ENCODE measurements at regions of chrX and their contacts with region 1.

Region 1: DNA sequence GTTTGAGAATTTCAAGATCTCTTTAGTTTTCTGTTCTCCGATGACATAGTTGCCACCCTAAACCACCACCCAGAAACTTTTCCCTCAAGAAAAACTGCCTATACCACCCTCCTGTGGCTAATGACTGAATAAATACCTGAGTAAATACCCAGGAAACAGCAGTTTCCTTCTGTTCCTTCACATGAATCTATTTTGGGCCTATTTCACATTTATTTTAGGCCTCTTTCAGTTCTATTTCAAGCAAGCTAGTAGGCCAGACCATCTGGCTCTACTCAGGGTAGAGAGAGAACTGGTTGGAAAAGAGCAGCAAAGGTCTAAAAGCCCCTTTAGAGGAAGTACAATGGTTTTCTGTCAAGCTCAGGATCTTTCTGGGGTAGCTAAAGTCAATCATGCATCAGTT is 23.4 kb downstream of the ARHGEF9 start:
- DNase-seq: peak in 2 of 3 donors; percentile 76 to 86
- H3K4me3 ChIP-seq: no peak overlapping the region
- H3K27ac ChIP-seq: no peak overlapping the region
- H3K4me1 ChIP-seq: peaks cover 6 to 27% (median 15%) of the 10 kb centered on the region in 4 experiments
- H3K27me3 ChIP-seq: no peaks in the 10 kb centered on the region

Region 2: DNA sequence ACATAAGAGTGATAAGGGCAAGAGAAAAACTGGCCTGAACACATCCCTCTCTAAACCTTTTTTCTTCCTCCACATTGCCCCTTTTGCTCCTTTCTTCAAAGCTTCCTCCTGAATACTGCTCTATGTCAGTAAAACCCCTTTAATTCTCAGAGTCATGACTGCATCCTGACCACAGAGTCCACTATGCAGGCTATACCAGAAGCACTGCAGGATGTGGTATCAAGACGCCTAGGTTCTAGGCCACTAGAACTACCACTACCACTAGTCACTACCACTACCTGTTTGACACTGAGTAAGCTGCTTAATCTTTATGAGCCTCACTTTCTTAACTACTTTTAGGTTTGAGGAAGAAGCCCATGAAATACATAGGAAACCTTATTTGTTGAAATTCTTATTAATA is 15.4 kb before region 1 on chrX:
- CTCF ChIA-PET with region 1: interaction called, 10 read pairs
- POLR2A ChIA-PET with region 1: no interaction called
- DNase-seq: peak in 2 of 3 donors; percentile 82 to 90
- H3K4me3 ChIP-seq: no peak overlapping the region
- H3K27ac ChIP-seq: no peak overlapping the region
- H3K4me1 ChIP-seq: peaks cover 6 to 31% (median 14%) of the 10 kb centered on the region in 4 experiments
- H3K27me3 ChIP-seq: no peaks in the 10 kb centered on the region